A673 (cell line): ENCODE measurements at regions of chr1 and their contacts with region 1.

Region 1: DNA sequence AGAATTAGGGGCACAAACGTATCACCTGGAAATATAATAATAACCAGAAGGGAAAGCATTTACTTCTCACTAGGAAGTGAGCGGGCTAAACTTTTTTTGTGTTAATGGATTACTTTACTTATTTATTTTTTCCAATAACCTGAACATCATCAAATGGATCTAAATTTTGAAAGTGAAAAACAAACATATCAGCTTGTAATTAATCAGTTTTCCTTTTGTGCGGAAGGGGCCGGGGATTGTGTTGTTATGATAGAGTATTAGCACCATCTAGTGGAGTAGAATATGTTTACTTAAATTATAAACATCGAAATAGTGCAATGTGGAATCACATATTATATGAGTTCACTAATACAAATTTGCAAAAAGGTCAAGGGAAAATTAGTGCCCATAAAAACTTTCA is 9.0 kb downstream of the CFH start:
- DNase-seq: peak; percentile 51
- H3K4me3 ChIP-seq: no peak overlapping the region
- H3K27ac ChIP-seq: no peak overlapping the region
- H3K4me1 ChIP-seq: no peaks in the 10 kb centered on the region
- H3K27me3 ChIP-seq: no peaks in the 10 kb centered on the region
- CTCF ChIP-seq: peak; percentile 63

Region 2: GRCh38 chr1:196317535-196318522 is 343.0 kb before region 1 on chr1:
- CTCF ChIA-PET with region 1: no interaction called
- POLR2A ChIA-PET with region 1: interaction called, 3 read pairs
- intact Hi-C with region 1: loop called (anchors 1 kb)
- DNase-seq: peak; percentile 46
- H3K4me3 ChIP-seq: no peak overlapping the region
- H3K27ac ChIP-seq: no peak overlapping the region
- H3K4me1 ChIP-seq: no peaks in the 10 kb centered on the region
- H3K27me3 ChIP-seq: no peaks in the 10 kb centered on the region
- CTCF ChIP-seq: peak; percentile 69

Region 3: DNA sequence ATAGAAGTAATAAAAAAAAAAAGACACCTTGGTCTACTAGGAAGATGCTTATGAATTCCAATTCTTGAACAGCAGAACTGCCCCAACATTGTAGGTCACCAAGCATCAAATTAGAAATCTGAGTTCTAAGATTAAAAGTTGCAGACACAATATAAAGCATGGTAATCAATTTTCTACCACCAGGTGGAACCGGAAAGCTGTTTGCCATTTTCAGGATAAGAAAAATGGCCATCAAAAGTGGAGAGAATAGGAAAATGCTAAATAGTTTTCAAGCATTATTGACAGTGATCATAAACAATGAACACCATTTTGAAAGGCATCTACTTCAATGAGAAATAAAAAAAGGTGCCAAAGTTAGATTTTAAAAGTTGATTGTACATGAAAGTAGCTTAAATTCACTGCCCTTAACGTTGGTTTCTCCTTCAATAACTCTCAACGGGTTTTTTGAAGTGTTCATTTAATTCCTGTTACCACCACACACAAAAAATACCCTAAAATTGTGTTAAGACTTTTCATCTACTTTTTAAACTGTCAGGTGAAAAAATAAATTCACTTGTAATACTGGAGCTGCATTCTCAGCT is 305.6 kb before region 1 on chr1:
- CTCF ChIA-PET with region 1: interaction called, 6 read pairs
- POLR2A ChIA-PET with region 1: no interaction called
- intact Hi-C with region 1: loop called (anchors 5 kb)
- DNase-seq: peak; percentile 3
- H3K4me3 ChIP-seq: no peak overlapping the region
- H3K27ac ChIP-seq: no peak overlapping the region
- H3K4me1 ChIP-seq: no peaks in the 10 kb centered on the region
- H3K27me3 ChIP-seq: peaks cover 5% of the 10 kb centered on the region
- CTCF ChIP-seq: peak; percentile 24; the same call in 1 of the 2 replicates